Ovary (tissue), 10 donors: ENCODE measurements at regions of chr1 and their contacts with region 1.

Region 1: DNA sequence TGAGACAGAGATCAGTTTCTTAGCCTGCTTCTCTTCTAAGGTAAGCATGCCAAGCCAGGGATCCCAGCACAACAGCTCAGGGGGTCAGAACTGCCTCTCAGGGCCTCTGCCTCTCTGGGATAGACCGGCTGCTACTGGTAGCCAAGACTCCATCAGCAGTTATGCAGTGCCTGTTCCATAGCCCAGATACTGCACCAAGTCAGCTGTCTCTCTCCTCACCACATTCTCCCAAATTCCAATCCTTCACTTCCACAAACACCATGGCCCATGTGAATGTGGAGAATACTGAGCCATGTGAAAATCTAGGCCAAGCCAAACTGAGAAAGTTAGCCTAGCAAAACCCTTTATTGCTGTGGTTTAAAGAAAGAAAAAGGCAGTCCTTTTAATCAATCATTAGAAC is 37.5 kb downstream of the CDC42BPA start:
- DNase-seq: no peak
- H3K4me3 ChIP-seq: no peak overlapping the region
- H3K27ac ChIP-seq: no peak overlapping the region
- H3K4me1 ChIP-seq: no peaks in the 10 kb centered on the region
- H3K27me3 ChIP-seq: no peaks in the 10 kb centered on the region
- CTCF ChIP-seq: no peak
- EP300 ChIP-seq: no peak
- POLR2A ChIP-seq: no peak

Region 2: DNA sequence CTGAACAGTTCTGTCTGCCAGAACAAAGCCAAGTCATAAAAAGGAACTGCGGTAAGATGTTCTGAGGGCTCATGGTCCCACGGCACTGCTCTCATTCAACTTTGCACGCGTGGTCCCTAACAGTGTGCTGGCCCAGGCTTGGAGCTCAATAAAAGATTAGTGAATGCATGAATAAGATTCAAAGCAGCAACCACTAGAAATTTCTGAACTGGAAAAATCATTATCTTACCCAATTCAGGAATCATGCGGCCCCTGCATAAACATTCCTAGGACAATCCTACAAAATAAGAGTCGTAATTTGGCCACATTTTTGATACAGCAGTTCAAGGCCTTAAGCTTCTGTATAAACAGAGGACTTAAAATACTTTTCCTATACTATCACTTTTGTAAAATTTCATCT is 49.8 kb after region 1 on chr1:
- intact Hi-C with region 1: loop called in 1 of 4 experiments (anchors 2 kb)
- DNase-seq: no peak
- H3K4me3 ChIP-seq: no peak overlapping the region
- H3K27ac ChIP-seq: no peak overlapping the region
- H3K4me1 ChIP-seq: no peaks in the 10 kb centered on the region
- H3K27me3 ChIP-seq: no peaks in the 10 kb centered on the region
- CTCF ChIP-seq: no peak
- EP300 ChIP-seq: no peak
- POLR2A ChIP-seq: no peak